AG04450 (cell line): ENCODE measurements at regions of chr2 and their contacts with region 1.

Region 1: GRCh38 chr2:170202437-170202836 is 24.5 kb downstream of the MYO3B start:
- DNase-seq: no peak
- H3K4me3 ChIP-seq: no peak overlapping the region
- H3K27ac ChIP-seq: no peak overlapping the region
- H3K27me3 ChIP-seq: no peaks in the 10 kb centered on the region
- CTCF ChIP-seq: no peak

Region 2: DNA sequence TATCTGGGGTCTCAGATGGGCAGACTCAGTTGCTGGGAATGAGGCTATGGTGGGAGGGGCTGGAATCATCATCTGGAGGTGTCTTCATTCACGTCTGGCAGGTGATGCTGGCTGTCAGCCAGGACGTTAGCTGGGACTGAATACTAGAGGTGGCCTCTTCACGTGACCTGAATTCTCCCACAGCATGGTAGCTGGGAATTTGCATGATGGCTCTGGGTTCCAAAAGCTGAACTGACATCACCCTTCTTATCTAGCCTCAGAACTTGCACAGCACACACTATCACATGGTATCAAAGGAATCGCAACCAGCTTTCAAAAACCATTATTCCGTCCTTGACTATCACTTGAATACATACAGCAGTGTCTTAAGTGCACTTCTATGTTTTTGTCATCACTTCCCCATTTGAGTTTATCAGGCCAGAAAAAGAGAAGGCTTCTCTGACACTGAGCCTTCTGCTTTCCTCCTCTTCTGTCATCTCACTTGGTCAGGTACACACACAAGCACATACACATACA is 787.1 kb before region 1 on chr2:
- CTCF ChIA-PET with region 1: no interaction called
- POLR2A ChIA-PET with region 1: interaction called, 10 read pairs
- DNase-seq: no peak
- H3K4me3 ChIP-seq: no peak overlapping the region
- H3K27ac ChIP-seq: no peak overlapping the region
- H3K27me3 ChIP-seq: no peaks in the 10 kb centered on the region
- CTCF ChIP-seq: no peak

Region 3: DNA sequence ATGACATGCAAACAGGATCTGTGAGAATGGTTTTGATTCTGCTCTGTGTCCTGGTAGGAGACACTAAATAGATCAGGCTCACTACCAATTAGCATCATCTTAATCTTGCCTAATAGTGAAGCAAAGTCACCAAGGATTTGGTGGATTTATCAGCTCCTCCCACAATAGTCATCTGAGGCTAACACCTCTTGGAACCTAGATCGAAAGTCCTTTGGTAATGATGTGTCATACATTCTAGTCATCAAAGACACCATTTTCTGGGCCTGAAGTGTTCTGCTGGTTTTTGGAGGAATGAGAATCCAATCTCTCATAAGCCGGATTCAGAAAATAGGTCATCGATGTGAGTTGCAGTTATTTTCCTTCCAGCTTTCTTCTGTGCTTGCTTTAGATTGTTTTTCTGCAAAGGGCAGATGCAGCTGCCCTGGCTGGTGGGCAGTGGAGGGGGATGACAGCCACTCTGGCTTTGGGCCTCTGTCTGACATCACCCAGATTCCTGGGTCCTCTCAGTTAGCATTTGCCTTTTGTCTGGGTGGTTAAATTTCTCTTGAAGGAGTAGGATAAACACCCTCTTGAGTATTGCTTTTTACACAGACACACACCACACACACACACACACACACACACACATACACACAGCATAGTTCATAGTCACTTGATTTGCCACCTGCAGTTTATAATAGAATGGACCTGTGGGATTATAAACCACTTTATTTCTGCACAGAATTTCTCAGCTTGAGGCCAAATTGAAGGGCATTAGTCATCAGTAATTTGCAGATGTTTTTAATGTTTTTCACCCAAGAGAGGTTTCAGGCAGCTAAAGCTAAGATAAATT is 24.3 kb before region 1 on chr2 and contains the start of gene MYO3B:
- CTCF ChIA-PET with region 1: no interaction called
- POLR2A ChIA-PET with region 1: no interaction called
- DNase-seq: no peak
- H3K4me3 ChIP-seq: no peak within 1 kb of the TSS
- H3K27ac ChIP-seq: no peak within 1 kb of the TSS
- H3K27me3 ChIP-seq: no peaks in the 10 kb centered on the region
- CTCF ChIP-seq: no peak
- polyA plus RNA-seq, gene MYO3B: 0.09 and 0.10 TPM in 2 replicates